Activated T-helper 2 cell treated with anti-CD3 and anti-CD28 coated beads, Interferon-gamma antibody, Interleukin-2, Interleukin-4, amounts not matched to agents 10 μg/mL and 5 μg/mL and 100 μg/mL, durations not matched to agents 14 hours and 24 hours and 36 hours (primary cell): ENCODE measurements at regions of chr11 and their contacts with region 1.

Region 1: GRCh38 chr11:94128746-94129511 is at the start of gene PANX1:
- DNase-seq: peak; percentile 71
- H3K4me3 Mint-ChIP-seq: peak within 1 kb of the TSS; percentile 87
- H3K27ac Mint-ChIP-seq: peak within 1 kb of the TSS; percentile 84
- H3K4me1 Mint-ChIP-seq: peaks cover 24% of the 10 kb centered on the region
- H3K27me3 Mint-ChIP-seq: no peaks in the 10 kb centered on the region
- total RNA-seq, gene PANX1: 18.1 and 20.0 TPM in 2 replicates

Region 2: DNA sequence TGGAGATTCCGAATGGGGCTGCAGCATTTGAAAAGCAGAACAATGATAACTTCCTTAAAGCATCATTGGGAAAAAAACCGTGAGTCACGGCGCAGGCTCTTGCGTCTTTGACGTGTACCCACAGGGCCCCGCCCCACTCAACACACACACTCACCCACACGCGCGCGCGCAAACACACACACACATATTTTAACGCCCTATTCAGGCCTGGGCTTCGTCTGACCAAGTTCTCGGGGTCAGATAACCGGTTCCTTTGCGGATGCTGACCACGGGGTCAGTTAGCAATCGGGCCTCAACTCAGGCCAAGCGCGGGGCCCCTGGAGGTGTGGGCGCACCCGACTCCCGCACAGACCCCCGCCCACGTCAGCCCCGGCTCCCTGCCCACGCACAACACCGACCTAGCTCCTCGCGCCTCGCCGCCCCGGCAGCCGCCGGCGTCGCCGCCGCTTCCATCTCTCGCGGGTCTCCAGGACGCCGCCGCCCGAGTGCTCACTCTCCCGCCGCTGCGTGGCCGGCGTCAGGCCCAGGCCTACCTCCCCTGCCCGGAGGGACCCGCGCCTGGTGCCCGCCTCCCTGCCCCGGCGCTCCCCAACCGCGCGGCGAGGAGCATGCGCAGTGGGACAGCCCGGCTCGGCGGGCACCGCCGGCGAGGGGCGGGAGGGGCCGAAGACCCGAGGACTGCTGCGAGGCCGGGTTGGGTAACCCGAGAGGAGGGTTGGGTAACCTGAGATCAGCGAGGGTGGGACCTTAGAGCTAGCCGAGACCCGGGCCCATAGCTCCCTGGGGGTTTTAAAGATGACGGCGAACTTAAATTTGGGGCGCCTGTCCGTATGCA is 931.3 kb before region 1 on chr11 and contains the start of gene SLC36A4:
- intact Hi-C with region 1: loop called (anchors 5 kb)
- DNase-seq: peak; percentile 83
- H3K4me3 Mint-ChIP-seq: peak within 1 kb of the TSS; percentile 88
- H3K27ac Mint-ChIP-seq: peak within 1 kb of the TSS; percentile 92
- H3K4me1 Mint-ChIP-seq: peaks cover 21% of the 10 kb centered on the region
- H3K27me3 Mint-ChIP-seq: peaks cover 15% of the 10 kb centered on the region
- total RNA-seq, gene SLC36A4: 18.9 and 19.8 TPM in 2 replicates

Region 3: GRCh38 chr11:94151903-94152677 is 23.2 kb after region 1 on chr11:
- intact Hi-C with region 1: loop called (anchors 1 kb)
- DNase-seq: no peak
- H3K4me3 Mint-ChIP-seq: no peak overlapping the region
- H3K27ac Mint-ChIP-seq: peak overlapping the region; percentile 71
- H3K4me1 Mint-ChIP-seq: peaks cover 57% of the 10 kb centered on the region
- H3K27me3 Mint-ChIP-seq: no peaks in the 10 kb centered on the region

Region 4: GRCh38 chr11:94472916-94473799 is 344.2 kb after region 1 on chr11:
- intact Hi-C with region 1: loop called (anchors 5 kb)
- DNase-seq: peak; percentile 10
- H3K4me3 Mint-ChIP-seq: peak overlapping the region; percentile 46
- H3K27ac Mint-ChIP-seq: peak overlapping the region; percentile 82
- H3K4me1 Mint-ChIP-seq: peaks cover 48% of the 10 kb centered on the region
- H3K27me3 Mint-ChIP-seq: no peaks in the 10 kb centered on the region

Region 5: GRCh38 chr11:94493281-94494125 is 364.6 kb after region 1 on chr11 and contains the starts of genes ANKRD49 and MRE11:
- intact Hi-C with region 1: loop called (anchors 2 kb)
- DNase-seq: peak; percentile 96
- H3K4me3 Mint-ChIP-seq: peak within 1 kb of the TSS; percentile 94
- H3K27ac Mint-ChIP-seq: peak within 1 kb of the TSS; percentile 92
- H3K4me1 Mint-ChIP-seq: peaks cover 23% of the 10 kb centered on the region
- H3K27me3 Mint-ChIP-seq: no peaks in the 10 kb centered on the region
- total RNA-seq, gene ANKRD49: 19.4 and 20.7 TPM in 2 replicates
- total RNA-seq, gene MRE11: 45.8 and 47.4 TPM in 2 replicates

Region 6: GRCh38 chr11:94543695-94544645 is 415.0 kb after region 1 on chr11 and contains the start of gene FUT4:
- intact Hi-C with region 1: loop called (anchors 5 kb)
- DNase-seq: peak; percentile 72
- H3K4me3 Mint-ChIP-seq: peak within 1 kb of the TSS; percentile 99
- H3K27ac Mint-ChIP-seq: peak within 1 kb of the TSS; percentile 100
- H3K4me1 Mint-ChIP-seq: peaks cover 32% of the 10 kb centered on the region
- H3K27me3 Mint-ChIP-seq: no peaks in the 10 kb centered on the region
- total RNA-seq, gene FUT4: 8.4 and 8.9 TPM in 2 replicates